Panc1 (cell line): ENCODE measurements at regions of chr20 and their contacts with region 1.

Region 1: DNA sequence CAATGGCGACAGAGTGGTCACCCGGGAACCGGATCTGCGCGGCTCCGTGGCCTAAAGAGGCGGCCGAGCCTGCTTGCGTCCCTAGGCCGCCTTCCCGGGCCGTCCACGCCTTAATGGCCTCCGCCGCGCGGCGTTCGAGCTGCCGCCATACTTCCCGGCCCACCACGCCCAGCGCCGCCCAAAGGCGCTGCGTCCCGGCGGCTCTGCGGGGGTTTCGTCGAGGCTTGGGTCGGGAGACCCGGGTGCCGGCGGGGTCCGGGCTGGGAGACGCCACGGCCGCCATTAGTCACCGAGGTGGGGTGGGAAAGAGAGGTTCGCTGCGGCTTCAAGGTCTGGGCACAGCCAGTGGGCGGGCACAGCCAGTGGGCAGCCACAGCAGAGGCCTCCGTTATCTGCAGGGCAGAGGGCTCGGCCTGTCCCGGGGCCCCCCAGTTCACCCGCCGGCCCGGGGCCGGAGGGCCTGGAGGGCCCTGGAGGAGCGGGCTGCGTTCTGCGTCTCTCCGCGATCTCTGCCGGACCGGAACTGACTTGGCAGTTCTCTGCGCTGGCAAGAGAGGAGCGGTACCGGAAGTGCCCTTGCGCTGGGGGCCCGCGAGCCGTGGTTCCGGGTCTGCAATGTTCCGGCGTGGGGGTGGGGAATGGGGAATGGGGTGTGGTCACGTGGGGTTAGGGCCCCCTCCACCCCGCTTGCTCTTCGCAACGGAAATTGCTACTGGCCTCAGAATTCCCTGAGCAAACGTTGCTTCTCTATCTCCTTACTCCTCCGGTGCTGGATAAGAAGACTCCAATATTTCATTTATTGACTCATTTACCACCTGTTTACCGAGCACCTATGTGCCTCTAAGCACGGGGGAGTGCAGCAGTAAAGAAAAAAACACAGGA is 82.3 kb downstream of the CNBD2 start:
- DNase-seq: peak; percentile 28
- ATAC-seq: peak; percentile 99
- H3K4me3 ChIP-seq: peak overlapping the region; percentile 70 to 91
- H3K27ac ChIP-seq: peak overlapping the region; percentile 98
- H3K4me1 ChIP-seq: peaks cover 7% of the 10 kb centered on the region
- H3K27me3 ChIP-seq: no peaks in the 10 kb centered on the region
- CTCF ChIP-seq: no peak

Region 2: DNA sequence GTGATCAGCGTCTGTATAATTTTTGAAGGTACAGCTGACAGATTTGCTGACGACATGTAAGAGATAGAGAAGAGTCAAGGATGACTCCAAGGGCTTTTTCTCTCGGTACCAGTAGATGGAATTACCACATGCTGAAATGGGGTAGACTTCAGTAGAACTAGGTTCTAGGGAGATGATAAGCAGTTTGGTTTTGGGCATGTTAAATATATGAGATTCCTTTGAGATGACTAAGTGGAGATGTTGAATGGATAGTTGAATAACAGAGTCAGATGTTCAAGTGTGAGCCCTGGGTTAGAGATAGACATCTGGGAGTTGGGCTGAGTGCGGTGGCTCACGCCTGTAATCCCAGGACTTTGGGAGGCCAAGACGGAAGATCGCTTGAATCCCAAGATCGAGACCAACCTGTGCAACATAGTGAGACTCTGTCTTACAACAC is 228.9 kb before region 1 on chr20:
- CTCF ChIA-PET with region 1: no interaction called
- POLR2A ChIA-PET with region 1: interaction called, 13 read pairs
- in situ Hi-C with region 1: no loop called
- intact Hi-C with region 1: no loop called
- DNase-seq: no peak
- ATAC-seq: peak; percentile 82
- H3K4me3 ChIP-seq: no peak overlapping the region
- H3K27ac ChIP-seq: no peak overlapping the region
- H3K4me1 ChIP-seq: peaks cover 12% of the 10 kb centered on the region
- H3K27me3 ChIP-seq: no peaks in the 10 kb centered on the region
- CTCF ChIP-seq: no peak

Region 3: GRCh38 chr20:36199345-36200257 is 148.9 kb after region 1 on chr20:
- CTCF ChIA-PET with region 1: no interaction called
- POLR2A ChIA-PET with region 1: no interaction called
- in situ Hi-C with region 1: no loop called
- intact Hi-C with region 1: no loop called
- DNase-seq: peak; percentile 68
- ATAC-seq: peak; percentile 94
- H3K4me3 ChIP-seq: no peak overlapping the region
- H3K27ac ChIP-seq: no peak overlapping the region
- H3K4me1 ChIP-seq: no peaks in the 10 kb centered on the region
- H3K27me3 ChIP-seq: no peaks in the 10 kb centered on the region; the same call in none of the 2 replicates
- CTCF ChIP-seq: peak; percentile 94